ENCODE measurements at regions of chr10 and their contacts with region 1.

Region 1: DNA sequence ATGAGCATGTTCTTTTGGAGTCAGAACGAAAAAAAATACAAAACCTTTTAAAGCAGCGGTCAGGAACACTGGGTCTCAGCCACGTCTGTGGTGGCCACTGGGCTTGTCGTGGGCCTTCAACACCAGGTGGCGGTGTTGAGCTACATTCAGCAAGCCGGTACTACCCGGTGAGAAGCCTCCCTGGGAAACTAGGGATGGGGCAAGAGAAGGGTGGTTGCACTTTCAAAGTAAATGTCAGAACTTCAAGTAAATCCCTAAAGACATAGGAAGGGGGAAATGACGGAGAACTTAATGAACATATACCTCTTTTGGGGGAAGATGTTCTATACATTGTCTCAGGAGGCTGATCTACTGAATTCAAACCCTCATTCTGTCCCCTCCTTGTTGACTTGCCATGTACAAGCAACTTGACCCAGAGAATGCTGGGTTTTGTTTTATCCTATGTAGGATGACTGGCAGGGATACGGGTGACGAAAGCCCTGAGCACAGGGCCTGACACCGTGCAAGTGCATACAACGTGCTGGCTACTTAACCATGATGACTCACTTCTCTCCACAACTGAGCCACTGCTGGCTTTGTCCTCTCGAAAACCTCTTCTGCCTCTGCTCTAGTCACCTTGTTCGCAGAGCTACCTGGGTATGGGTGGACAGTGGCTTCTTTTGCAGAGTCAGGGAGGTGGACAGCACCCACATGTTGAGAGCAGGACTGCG is 49.0 kb upstream of the BAMBI start:
- DNase-seq: peak; percentile 68 to 86 (median 76)
- ATAC-seq: peak; percentile 28 to 93 (median 88)
- H3K4me3 ChIP-seq: no peak overlapping the region
- H3K27ac ChIP-seq: no peak overlapping the region
- H3K4me1 ChIP-seq: peaks cover 0 to 8% (median 0%) of the 10 kb centered on the region in 12 donors
- H3K27me3 ChIP-seq: peaks cover 0 to 10% (median 0%) of the 10 kb centered on the region in 9 donors
- CTCF ChIP-seq: peak; percentile 77 to 98 (median 85)
- POLR2A ChIP-seq: no peak

Region 2: GRCh38 chr10:28177944-28178637 is 450.2 kb before region 1 on chr10:
- intact Hi-C with region 1: no loop called
- DNase-seq: no peak
- ATAC-seq: no peak
- H3K4me3 ChIP-seq: peak overlapping the region in 6 of 12 donors; percentile 18 to 45 (median 26)
- H3K27ac ChIP-seq: peak overlapping the region in 3 of 12 donors; percentile 19 to 66 (median 48)
- H3K4me1 ChIP-seq: peaks cover 0 to 16% (median 7%) of the 10 kb centered on the region in 12 donors
- H3K27me3 ChIP-seq: no peaks in the 10 kb centered on the region
- CTCF ChIP-seq: no peak
- POLR2A ChIP-seq: no peak

Region 3: GRCh38 chr10:28381903-28382347 is 246.4 kb before region 1 on chr10:
- intact Hi-C with region 1: no loop called
- DNase-seq: peak in 4 of 5 donors; percentile 64 to 78 (median 72)
- ATAC-seq: peak; percentile 80 to 91 (median 84)
- H3K4me3 ChIP-seq: no peak overlapping the region
- H3K27ac ChIP-seq: no peak overlapping the region
- H3K4me1 ChIP-seq: peaks cover 0 to 7% (median 0%) of the 10 kb centered on the region in 12 donors
- H3K27me3 ChIP-seq: peaks cover 0 to 4% (median 0%) of the 10 kb centered on the region in 9 donors
- CTCF ChIP-seq: peak; percentile 86 to 97 (median 92)
- POLR2A ChIP-seq: no peak

Region 4: GRCh38 chr10:29409241-29410057 is 781.1 kb after region 1 on chr10:
- intact Hi-C with region 1: loop called in 1 of 10 experiments (anchors 10 kb)
- DNase-seq: peak; percentile 79 to 89 (median 85)
- ATAC-seq: peak; percentile 90 to 97 (median 96)
- H3K4me3 ChIP-seq: peak overlapping the region; percentile 52 to 89 (median 81)
- H3K27ac ChIP-seq: peak overlapping the region; percentile 78 to 95 (median 90)
- H3K4me1 ChIP-seq: peaks cover 0 to 48% (median 39%) of the 10 kb centered on the region in 12 donors
- H3K27me3 ChIP-seq: no peaks in the 10 kb centered on the region
- CTCF ChIP-seq: peak in 4 of 12 donors; percentile 6 to 40 (median 26)
- POLR2A ChIP-seq: peak in 1 of 2 donors; percentile 46